ENCODE measurements at regions of chr10 and their contacts with region 1.

Region 1: DNA sequence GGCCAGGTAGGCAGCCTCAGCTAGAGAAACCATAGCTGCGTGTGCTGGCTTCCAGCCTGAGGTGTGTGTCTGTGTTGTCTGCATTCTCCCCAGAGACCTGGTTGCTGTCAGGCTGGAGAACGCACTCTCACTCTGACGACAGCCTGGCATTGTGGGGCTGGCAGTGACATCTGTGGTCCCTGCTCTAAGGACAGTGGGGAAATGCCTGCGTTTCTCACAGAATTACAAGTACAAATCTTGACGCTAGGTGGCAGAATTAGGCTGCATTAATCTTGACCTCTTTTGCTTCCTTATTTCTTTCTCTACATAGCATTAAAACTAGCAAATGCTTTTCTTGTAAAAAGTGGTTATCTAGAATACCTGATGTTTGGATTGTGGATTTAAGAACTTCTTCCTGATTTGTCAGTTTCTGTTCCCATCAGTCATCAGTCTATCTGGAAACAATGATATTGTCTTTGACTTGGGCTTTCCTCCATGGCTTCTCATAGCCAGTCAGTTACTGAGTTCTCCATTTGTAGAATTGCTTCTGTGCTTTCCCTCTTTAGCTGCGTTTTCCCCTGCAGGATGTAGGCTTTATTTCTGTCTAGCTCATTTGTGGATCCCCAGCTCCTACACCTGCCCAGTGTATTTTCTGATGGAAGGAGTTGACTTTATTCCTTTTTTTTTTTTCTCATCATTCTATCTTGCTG is 86.0 kb downstream of the FANK1 start:
- DNase-seq: peak; percentile 78
- H3K4me3 ChIP-seq: no peak overlapping the region
- H3K27ac ChIP-seq: no peak overlapping the region
- H3K4me1 ChIP-seq: no peaks in the 10 kb centered on the region
- H3K27me3 ChIP-seq: no peaks in the 10 kb centered on the region
- CTCF ChIP-seq: peak; percentile 39 to 42
- POLR2A ChIP-seq: no peak

Region 2: GRCh38 chr10:125868372-125868975 is 113.9 kb before region 1 on chr10:
- CTCF ChIA-PET with region 1: no interaction called
- POLR2A ChIA-PET with region 1: no interaction called
- dilution Hi-C with region 1: no loop called
- intact Hi-C with region 1: loop called (anchors 2 kb)
- DNase-seq: peak; percentile 73
- H3K4me3 ChIP-seq: no peak overlapping the region
- H3K27ac ChIP-seq: no peak overlapping the region
- H3K4me1 ChIP-seq: no peaks in the 10 kb centered on the region
- H3K27me3 ChIP-seq: no peaks in the 10 kb centered on the region
- CTCF ChIP-seq: peak; percentile 57 to 61
- POLR2A ChIP-seq: no peak

Region 3: DNA sequence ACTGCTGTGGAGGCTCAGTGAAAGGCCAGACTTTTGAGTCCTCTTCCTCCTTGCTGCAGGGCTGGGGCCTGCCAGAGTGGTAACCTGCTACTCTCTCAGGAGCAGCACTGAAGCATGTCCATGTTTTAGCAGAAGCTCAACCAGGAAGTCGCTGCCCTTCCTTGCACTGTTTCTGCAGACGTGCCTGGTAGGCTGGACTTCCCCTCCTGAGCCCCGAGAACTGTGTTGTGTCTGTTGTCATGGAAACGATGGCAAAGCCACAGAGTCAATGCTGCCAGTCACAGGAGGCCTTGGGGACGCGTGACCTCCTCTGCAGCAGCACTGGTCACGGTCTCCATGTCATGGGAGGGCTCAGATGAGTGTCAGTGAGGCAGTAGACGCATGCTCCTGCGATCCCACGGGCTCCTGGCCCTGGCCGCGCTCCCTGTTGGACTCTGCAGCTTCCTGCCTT is 59.4 kb after region 1 on chr10:
- CTCF ChIA-PET with region 1: no interaction called
- POLR2A ChIA-PET with region 1: no interaction called
- dilution Hi-C with region 1: no loop called
- intact Hi-C with region 1: loop called (anchors 1 kb)
- DNase-seq: peak; percentile 98
- H3K4me3 ChIP-seq: no peak overlapping the region
- H3K27ac ChIP-seq: peak overlapping the region; percentile 76
- H3K4me1 ChIP-seq: peaks cover 14% of the 10 kb centered on the region
- H3K27me3 ChIP-seq: no peaks in the 10 kb centered on the region
- CTCF ChIP-seq: no peak
- POLR2A ChIP-seq: no peak

Region 4: GRCh38 chr10:126097558-126098225 is 115.3 kb after region 1 on chr10:
- CTCF ChIA-PET with region 1: interaction called, 88 read pairs
- POLR2A ChIA-PET with region 1: no interaction called
- dilution Hi-C with region 1: no loop called
- intact Hi-C with region 1: loop called (anchors 1 kb)
- DNase-seq: no peak
- H3K4me3 ChIP-seq: no peak overlapping the region
- H3K27ac ChIP-seq: no peak overlapping the region
- H3K4me1 ChIP-seq: peaks cover 8% of the 10 kb centered on the region
- H3K27me3 ChIP-seq: peaks cover 0 to 2% of the 10 kb centered on the region in 2 experiments
- CTCF ChIP-seq: peak; percentile 20 to 38
- POLR2A ChIP-seq: no peak

Region 5: GRCh38 chr10:126302826-126303665 is 320.6 kb after region 1 on chr10:
- CTCF ChIA-PET with region 1: no interaction called
- POLR2A ChIA-PET with region 1: no interaction called
- dilution Hi-C with region 1: no loop called
- intact Hi-C with region 1: loop called (anchors 5 kb)
- DNase-seq: no peak
- H3K4me3 ChIP-seq: no peak overlapping the region
- H3K27ac ChIP-seq: no peak overlapping the region
- H3K4me1 ChIP-seq: no peaks in the 10 kb centered on the region
- H3K27me3 ChIP-seq: no peaks in the 10 kb centered on the region
- CTCF ChIP-seq: no peak
- POLR2A ChIP-seq: no peak

Region 6: GRCh38 chr10:126504063-126504739 is 521.8 kb after region 1 on chr10:
- CTCF ChIA-PET with region 1: interaction called, 8 read pairs
- POLR2A ChIA-PET with region 1: no interaction called
- dilution Hi-C with region 1: no loop called
- intact Hi-C with region 1: loop called (anchors 1 kb)
- DNase-seq: peak; percentile 47
- H3K4me3 ChIP-seq: no peak overlapping the region
- H3K27ac ChIP-seq: no peak overlapping the region
- H3K4me1 ChIP-seq: no peaks in the 10 kb centered on the region
- H3K27me3 ChIP-seq: no peaks in the 10 kb centered on the region
- CTCF ChIP-seq: peak; percentile 39 to 50
- POLR2A ChIP-seq: no peak

Region 7: DNA sequence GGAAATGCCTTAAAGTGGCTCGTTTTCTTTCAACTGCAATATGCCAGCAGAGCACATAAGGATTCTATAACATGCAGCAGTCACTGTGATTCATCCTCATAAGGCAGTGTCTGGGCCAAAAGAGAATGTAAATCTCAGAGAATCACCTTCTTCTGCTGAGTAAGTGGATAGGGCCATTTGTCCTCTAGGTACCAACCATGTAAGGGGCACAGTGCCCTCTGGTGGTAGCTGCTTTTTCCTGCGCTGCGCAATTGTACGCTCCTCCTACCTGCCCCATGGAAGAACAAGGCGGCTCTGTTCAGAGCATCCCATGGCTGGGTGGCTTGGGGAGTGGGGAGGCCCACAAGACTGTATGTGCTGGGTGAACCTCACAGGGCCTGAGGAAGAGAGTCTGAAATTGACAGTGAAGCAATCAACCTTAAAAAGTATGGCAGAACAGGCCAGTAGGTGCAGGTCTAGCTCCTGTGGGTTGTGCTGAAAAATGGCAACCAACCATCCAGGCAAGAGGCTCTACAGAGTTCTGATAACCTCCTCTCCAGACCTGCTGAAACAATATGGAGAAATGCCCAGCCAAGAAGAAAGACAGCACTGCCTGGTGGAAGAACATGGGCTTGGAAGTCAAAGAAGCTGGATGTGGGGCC is 766.7 kb after region 1 on chr10:
- CTCF ChIA-PET with region 1: interaction called, 30 read pairs
- POLR2A ChIA-PET with region 1: no interaction called
- dilution Hi-C with region 1: no loop called
- intact Hi-C with region 1: loop called (anchors 1 kb)
- DNase-seq: peak; percentile 69
- H3K4me3 ChIP-seq: no peak overlapping the region
- H3K27ac ChIP-seq: no peak overlapping the region
- H3K4me1 ChIP-seq: no peaks in the 10 kb centered on the region
- H3K27me3 ChIP-seq: no peaks in the 10 kb centered on the region
- CTCF ChIP-seq: peak; percentile 67 to 69
- POLR2A ChIP-seq: no peak

Measured in endothelial cell of umbilical vein (primary cell).